A549 (cell line): ENCODE measurements at regions of chr5 and their contacts with region 1.

Region 1: GRCh38 chr5:33997331-33997983 is 10.4 kb downstream of the AMACR start:
- DNase-seq: peak; percentile 47 to 70
- ATAC-seq: peak; percentile 90 to 94; a peak in 5 of 6 replicates
- H3K4me3 ChIP-seq: no peak overlapping the region
- H3K27ac ChIP-seq: no peak overlapping the region
- H3K4me1 ChIP-seq: peaks cover 4% of the 10 kb centered on the region; the same call in 2 of the 3 replicates
- CTCF ChIP-seq: peak; percentile 76
- EP300 ChIP-seq: no peak
- POLR2A ChIP-seq: no peak
- RAD21 ChIP-seq: peak; percentile 64 to 66

Region 2: DNA sequence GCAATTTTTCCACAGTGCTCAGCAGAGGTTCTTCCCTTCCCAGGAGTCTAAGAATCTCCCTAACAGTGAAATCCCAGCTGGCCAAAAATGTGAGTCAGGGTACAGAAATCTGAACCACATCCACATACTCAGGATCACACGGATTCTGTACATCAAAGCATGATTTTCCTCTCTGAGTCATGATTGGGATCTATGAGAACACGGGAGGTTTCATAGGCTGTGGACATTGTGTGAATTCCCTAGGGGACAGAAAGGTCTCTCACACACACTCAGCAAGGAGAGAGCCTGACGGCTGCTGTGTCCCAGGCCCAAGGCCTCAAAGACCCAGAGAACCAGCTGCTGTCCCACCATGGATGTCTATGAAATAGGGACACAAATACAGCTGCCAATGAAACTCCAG is 208.5 kb before region 1 on chr5:
- CTCF ChIA-PET with region 1: no interaction called
- POLR2A ChIA-PET with region 1: no interaction called
- DNase-seq: peak in 1 of 2 experiments; percentile 13
- ATAC-seq: peak; percentile 62 to 89
- H3K4me3 ChIP-seq: no peak overlapping the region
- H3K27ac ChIP-seq: peak overlapping the region; percentile 55 to 60; a peak in 5 of 6 replicates
- H3K4me1 ChIP-seq: peaks cover 10% of the 10 kb centered on the region; the same call in 2 of the 3 replicates
- CTCF ChIP-seq: no peak
- EP300 ChIP-seq: no peak
- POLR2A ChIP-seq: no peak
- RAD21 ChIP-seq: no peak

Region 3: DNA sequence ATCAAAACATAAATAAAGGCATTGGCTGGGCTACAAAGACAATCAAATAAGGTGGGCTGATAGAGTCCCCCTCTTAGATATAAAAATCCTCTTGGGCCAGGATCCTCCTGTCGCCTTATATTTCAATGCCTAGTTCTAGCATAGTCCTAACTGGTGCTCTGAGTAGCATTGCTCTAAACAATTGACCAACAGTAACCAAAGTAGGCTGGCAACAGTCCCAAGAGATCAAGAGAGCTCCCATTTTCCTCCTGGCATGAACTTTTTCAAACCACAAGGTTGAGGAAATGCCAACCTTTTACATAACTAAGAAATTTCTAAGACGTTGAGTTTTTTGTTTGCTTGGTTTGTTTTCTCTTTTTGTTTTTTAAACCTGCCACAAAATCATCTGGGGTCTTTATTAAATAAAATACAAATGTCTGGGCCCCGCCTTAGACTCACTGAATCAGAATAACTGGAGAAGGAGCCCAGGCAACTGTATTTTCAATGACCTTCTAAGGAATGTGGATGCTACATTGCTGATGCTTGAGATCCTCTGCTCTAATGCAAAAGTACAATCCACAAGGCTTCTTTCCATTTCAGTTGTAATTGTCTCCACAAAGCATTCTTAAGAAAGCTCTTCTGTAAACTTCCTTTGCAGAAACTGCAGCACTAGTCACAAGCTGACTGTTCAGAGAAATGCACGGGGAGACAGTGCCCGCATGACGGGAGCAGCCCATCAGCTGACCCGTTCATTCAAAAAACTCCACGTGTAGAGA is 15.9 kb before region 1 on chr5:
- CTCF ChIA-PET with region 1: interaction called, 12 read pairs
- POLR2A ChIA-PET with region 1: no interaction called
- DNase-seq: no peak
- ATAC-seq: no peak
- H3K4me3 ChIP-seq: no peak overlapping the region
- H3K27ac ChIP-seq: no peak overlapping the region
- H3K4me1 ChIP-seq: no peaks in the 10 kb centered on the region
- CTCF ChIP-seq: no peak
- EP300 ChIP-seq: no peak
- POLR2A ChIP-seq: no peak
- RAD21 ChIP-seq: no peak

Region 4: DNA sequence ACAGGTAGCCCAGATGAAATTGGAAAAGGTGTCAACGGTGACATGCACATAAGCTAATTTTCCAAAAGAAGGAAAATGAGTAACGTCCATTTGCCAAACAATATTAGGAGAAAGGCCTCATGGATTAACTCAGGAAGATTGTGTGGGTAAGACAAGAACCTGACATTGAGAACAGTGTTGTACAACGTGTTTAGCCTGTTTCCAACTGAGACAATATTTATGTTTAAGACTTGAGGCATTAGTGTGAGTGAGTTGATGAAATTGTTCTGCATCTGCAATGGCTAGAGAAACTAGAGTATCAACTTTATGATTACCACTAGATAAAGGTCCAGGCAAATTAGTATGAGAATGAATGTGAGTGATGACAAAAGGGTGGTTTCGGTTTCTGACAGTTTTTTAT is 467.4 kb after region 1 on chr5:
- CTCF ChIA-PET with region 1: interaction called, 22 read pairs
- POLR2A ChIA-PET with region 1: no interaction called
- DNase-seq: no peak
- ATAC-seq: no peak
- H3K4me3 ChIP-seq: no peak overlapping the region
- H3K27ac ChIP-seq: no peak overlapping the region
- H3K4me1 ChIP-seq: peaks cover 18% of the 10 kb centered on the region
- CTCF ChIP-seq: no peak
- EP300 ChIP-seq: no peak
- POLR2A ChIP-seq: no peak
- RAD21 ChIP-seq: no peak